ENCODE measurements at regions of chr1 and their contacts with region 1.

Region 1: GRCh38 chr1:33043267-33044092 is 6.8 kb upstream of the AK2 start:
- DNase-seq: no peak

Region 2: DNA sequence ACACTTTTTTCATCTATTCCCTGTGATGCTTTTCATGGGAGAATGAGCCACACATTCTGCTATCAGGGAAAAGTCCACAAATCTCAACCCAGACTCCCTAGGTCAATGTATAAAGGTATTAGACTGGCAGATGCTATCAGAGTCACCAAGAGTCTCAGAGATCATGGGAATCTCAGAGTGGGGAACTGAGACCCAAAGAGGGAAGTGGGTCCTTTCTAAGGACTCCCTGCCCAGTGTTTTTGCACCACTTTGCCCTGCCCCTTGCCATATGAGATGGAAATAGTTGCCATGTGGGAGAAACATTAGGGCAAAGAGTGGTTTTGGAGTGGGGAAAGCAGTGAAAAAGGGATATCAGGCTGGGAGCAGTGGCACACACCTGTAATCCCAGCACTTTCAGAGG is 18.4 kb after region 1 on chr1:
- intact Hi-C with region 1: loop called in 1 of 2 experiments (anchors 2 kb)
- DNase-seq: no peak

Measured in posterior vena cava (tissue), 2 donors.